GM12878 (cell line): ENCODE measurements at regions of chr1 and their contacts with region 1.

Region 1: GRCh38 chr1:224182866-224183590 is at the start of gene DEGS1:
- DNase-seq: no peak
- ATAC-seq: peak; percentile 76
- H3K4me3 ChIP-seq: peak within 1 kb of the TSS; percentile 90
- H3K27ac ChIP-seq: peak within 1 kb of the TSS; percentile 91
- H3K4me1 ChIP-seq: peaks cover 16% of the 10 kb centered on the region; the same call in 1 of the 2 replicates
- H3K27me3 ChIP-seq: no peaks in the 10 kb centered on the region
- CTCF ChIP-seq: no peak
- EP300 ChIP-seq: no peak; a peak in 1 of 4 replicates
- POLR2A ChIP-seq: peak; percentile 97
- RAD21 ChIP-seq: no peak
- polyA plus RNA-seq, gene DEGS1: 16.5 to 26.7 TPM

Region 2: DNA sequence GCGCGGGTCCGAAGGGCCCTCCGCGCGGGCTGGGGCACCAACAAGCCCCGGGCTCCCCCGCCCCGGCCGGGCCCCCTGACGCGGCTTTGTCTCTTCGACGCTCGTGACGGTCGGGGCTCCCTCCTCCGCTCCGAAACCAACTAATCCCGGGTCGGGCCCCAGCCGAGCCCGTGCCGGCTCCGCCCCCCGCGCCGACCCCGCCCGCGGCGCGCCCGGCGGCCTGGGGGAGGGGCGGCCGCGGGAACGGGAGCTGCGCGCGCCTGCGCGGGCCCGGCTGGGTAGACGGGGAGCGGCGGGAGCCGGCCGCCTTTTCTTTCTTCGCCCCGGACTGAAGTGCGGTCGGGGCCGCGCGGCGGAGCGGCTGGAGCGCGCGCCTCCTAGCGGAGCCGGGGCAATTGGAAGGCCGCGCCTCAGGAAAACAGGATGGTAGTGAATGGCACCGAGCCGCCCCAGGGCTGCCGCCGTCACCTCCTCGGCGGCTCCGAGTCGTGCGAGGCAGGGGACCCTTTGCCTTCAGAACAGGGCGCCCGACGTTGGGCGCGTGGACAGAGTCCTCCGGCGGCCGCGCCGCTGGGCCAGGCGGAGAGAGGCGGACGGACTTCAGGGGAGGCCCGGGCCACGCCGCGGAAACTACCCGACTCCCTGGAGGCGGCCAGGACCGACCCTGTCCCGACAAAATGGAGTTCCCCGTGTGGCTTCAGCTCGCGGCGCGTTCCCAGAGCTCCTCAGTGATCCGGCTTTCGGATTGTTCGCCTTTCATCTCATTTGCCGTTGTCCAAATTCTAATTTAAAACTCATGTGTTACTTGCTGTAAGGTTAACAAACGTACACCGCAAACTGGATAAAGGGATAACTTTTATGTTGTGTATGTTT is 337.0 kb before region 1 on chr1 and contains the start of gene TP53BP2:
- CTCF ChIA-PET with region 1: no interaction called
- POLR2A ChIA-PET with region 1: no interaction called
- RAD21 ChIA-PET with region 1: interaction called, 3 read pairs
- SMC1A ChIA-PET with region 1: no interaction called
- in situ Hi-C with region 1: no loop called
- intact Hi-C with region 1: loop called (anchors 5 kb)
- DNase-seq: no peak
- ATAC-seq: peak; percentile 78
- H3K4me3 ChIP-seq: peak within 1 kb of the TSS; percentile 76
- H3K27ac ChIP-seq: peak within 1 kb of the TSS; percentile 60
- H3K4me1 ChIP-seq: peaks cover 6% of the 10 kb centered on the region; the same call in 1 of the 2 replicates
- H3K27me3 ChIP-seq: no peaks in the 10 kb centered on the region; a peak in 2 of 4 replicates
- CTCF ChIP-seq: peak; percentile 37 to 63 (median 59); a peak in 4 of 6 replicates
- EP300 ChIP-seq: 0 out of 4 replicates have a peak, but pooled peaks of 1 of the 2 experiments have one; percentile 21
- POLR2A ChIP-seq: peak; percentile 75
- RAD21 ChIP-seq: 0 out of 2 replicates have a peak, but pooled peaks have one; percentile 16
- polyA plus RNA-seq, gene TP53BP2: 1.6 to 1.7 TPM

Region 3: DNA sequence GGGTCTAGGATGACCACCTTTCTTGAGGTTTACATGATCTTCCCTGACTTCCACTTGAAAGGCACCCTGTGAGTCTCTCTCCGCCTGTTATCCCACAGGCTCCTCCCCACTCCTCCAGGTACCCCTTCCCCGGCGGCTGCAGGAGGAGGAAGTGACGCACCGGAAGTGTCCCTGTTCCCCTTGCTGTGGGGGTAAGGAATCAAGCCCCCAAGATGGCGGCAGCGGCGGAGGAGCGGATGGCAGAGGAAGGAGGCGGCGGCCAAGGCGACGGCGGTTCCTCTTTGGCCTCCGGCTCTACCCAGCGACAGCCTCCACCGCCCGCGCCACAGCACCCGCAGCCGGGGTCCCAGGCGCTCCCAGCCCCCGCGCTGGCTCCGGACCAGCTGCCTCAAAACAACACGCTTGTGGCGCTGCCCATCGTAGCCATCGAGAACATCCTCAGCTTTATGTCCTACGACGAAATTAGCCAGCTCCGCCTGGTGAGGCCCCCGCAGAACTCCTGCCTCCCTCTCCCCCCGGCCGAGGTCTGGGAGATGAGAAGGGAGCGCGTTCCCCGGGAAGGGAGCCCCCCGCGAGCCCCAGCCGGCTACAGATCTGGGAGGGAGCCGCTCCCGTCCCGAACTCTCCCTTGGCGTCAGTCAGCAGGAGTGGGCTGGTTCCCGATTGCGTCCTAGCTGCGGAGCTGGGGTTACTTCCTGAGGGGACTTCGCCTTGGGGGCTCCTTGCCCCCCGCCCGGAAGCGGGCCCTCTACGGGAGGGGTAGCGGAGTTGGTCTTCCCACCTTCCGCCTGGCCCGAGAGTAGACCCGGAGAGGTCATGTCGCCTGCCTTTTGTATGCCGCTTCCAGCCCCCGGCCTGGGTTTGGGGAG is 68.9 kb before region 1 on chr1 and contains the start of gene FBXO28:
- CTCF ChIA-PET with region 1: interaction called, 9 read pairs
- POLR2A ChIA-PET with region 1: interaction called, 4 read pairs
- RAD21 ChIA-PET with region 1: interaction called, 4 read pairs
- SMC1A ChIA-PET with region 1: interaction called, 6 read pairs
- in situ Hi-C with region 1: no loop called
- intact Hi-C with region 1: loop called (anchors 2 kb)
- DNase-seq: peak; percentile 77
- ATAC-seq: peak; percentile 97
- H3K4me3 ChIP-seq: peak within 1 kb of the TSS; percentile 86
- H3K27ac ChIP-seq: peak within 1 kb of the TSS; percentile 81
- H3K4me1 ChIP-seq: 0 out of 2 replicates have a peak, but pooled peaks cover 2% of the 10 kb centered on the region
- H3K27me3 ChIP-seq: no peaks in the 10 kb centered on the region
- CTCF ChIP-seq: no peak
- EP300 ChIP-seq: no peak
- POLR2A ChIP-seq: peak; percentile 99
- RAD21 ChIP-seq: no peak
- polyA plus RNA-seq, gene FBXO28: 4.3 to 4.5 TPM

Region 4: GRCh38 chr1:224168859-224169380 is 14.1 kb before region 1 on chr1:
- CTCF ChIA-PET with region 1: interaction called, 13 read pairs
- POLR2A ChIA-PET with region 1: interaction called, 16 read pairs
- RAD21 ChIA-PET with region 1: interaction called, 8 read pairs
- SMC1A ChIA-PET with region 1: interaction called, 14 read pairs
- in situ Hi-C with region 1: no loop called
- intact Hi-C with region 1: loop called (anchors 1 kb)
- DNase-seq: peak; percentile 90
- ATAC-seq: peak; percentile 95
- H3K4me3 ChIP-seq: no peak overlapping the region
- H3K27ac ChIP-seq: no peak overlapping the region
- H3K4me1 ChIP-seq: peaks cover 13% of the 10 kb centered on the region
- H3K27me3 ChIP-seq: no peaks in the 10 kb centered on the region
- CTCF ChIP-seq: no peak
- EP300 ChIP-seq: peak in 1 of 2 experiments; percentile 75; a peak in 1 of 4 replicates
- POLR2A ChIP-seq: no peak
- RAD21 ChIP-seq: no peak

Region 5: DNA sequence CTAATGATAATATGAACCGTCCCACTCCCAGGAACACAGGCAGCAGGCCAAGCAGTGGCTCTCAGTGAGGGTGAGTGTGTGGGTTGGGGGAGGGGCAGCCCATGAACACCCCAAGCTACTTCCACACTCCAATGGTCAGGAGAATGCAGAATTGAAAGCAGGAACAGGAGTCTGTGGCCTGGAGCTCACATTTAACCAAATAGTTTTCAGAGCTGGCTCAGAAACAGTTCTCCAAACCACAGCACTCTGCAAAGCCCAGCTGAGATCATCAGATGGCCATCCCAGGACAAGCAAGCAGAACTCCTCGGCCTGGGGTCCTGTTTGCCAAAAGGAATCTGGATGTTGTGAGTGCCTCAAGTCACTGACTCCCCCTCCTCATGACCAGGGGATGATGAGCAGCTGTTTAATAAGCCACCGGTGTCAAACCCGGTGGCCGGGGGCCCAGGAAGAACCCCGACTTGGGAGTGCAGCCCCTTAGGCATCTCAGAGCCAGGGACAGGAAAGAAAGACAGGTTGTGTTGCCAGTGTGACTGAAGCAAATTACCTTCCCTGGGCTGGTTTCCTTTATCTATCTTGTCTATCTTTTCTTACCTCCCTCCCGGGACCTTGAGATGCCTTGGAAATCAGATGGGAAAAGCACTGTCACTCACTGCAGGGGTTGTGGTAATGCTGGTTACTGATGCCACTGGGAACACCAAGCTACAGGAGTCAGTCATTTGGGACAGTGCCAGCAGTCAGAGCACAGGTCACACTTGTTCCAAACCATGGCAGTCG is 20.4 kb after region 1 on chr1:
- CTCF ChIA-PET with region 1: interaction called, 4 read pairs
- POLR2A ChIA-PET with region 1: interaction called, 7 read pairs
- RAD21 ChIA-PET with region 1: interaction called, 6 read pairs
- SMC1A ChIA-PET with region 1: interaction called, 11 read pairs
- in situ Hi-C with region 1: no loop called
- intact Hi-C with region 1: loop called (anchors 2 kb)
- DNase-seq: peak; percentile 70
- ATAC-seq: peak; percentile 75
- H3K4me3 ChIP-seq: no peak overlapping the region
- H3K27ac ChIP-seq: no peak overlapping the region
- H3K4me1 ChIP-seq: peaks cover 27% of the 10 kb centered on the region
- H3K27me3 ChIP-seq: no peaks in the 10 kb centered on the region
- CTCF ChIP-seq: no peak
- EP300 ChIP-seq: peak in 1 of 2 experiments; percentile 79; a peak in 2 of 4 replicates
- POLR2A ChIP-seq: no peak
- RAD21 ChIP-seq: no peak